Posterior vena cava (tissue), 2 donors: ENCODE measurements at regions of chr20 and their contacts with region 1.

Region 1: DNA sequence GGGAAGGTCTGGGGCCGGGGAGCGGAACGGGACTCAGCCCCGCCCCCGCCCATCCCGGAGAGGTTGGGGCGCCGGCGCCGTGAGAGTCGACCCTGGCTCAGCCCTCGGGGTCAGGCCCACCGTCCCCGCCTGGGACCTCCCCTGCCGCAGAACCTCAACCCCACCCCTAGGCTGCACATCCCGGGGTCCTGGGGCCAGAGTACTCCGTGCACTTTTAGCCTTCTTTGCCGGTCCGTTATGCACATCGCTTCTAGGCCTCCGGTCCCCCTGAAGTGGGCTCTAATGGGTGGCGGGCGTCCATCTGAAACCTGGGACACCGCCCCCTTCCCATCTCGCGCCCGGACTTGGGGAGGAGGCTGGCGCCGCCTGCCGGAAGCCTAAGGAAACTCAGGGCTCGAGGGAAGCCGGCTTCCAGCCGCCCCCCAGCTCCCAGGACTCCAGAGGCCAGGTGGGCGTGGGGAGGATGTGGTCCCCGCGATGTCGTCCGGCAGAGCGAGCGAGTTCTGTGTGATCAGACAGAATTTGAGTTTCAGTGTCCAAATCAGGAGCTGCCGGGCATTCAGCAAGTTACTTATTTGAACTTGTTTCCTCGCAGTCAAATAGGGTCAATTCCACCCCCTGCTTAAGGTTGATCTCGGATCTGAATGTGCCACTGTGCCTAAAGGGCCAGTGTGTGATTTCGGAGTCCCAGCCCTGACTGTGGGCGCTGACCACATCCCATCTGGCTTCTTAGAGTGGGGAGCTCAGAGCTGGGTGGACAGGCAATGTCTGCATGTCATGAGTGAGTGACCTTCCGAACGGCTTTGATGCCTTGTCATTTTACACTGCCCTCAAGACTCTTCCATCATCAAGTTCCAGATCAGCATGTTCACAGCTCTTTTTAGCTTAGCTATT is 47.6 kb downstream of the CPXM1 start:
- DNase-seq: no peak

Region 2: GRCh38 chr20:2783908-2784566 is 31.2 kb after region 1 on chr20:
- intact Hi-C with region 1: no loop called
- DNase-seq: no peak

Region 3: DNA sequence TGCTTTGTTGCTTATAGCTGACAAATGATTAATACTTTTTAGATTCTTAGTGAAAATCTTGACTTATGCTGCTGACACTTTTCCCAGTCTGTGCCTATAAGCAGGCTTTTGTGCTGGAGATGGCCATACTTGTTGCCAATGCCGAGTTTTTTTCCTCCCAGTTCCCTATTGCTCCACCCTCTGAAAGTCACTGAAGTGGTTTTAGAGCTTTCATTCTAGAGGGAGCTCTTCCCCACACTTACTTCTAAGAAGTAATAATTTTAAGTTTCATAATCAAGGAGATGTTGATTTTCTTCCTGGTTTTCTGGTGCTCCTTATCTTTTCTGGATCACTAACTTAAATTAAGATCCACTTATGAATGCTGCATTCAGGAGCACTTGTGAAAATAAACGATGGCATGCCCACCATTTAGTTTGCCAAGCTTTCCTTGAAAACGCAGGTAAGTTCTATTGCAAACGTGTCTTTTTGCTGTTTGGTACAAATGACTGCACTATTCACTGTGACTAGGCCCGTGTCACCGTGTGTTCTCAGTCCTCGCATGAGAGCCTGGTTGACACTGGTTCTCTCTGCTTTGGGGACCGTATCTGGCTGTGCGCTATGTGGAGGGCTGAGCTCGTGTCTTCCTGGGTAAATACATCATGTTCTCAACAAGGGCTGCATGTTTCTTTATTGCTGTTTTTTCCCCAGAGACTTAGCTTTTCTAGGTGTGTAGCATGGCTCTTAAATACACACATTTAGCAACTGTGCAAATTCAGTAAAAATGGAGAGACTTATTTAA is 860.2 kb after region 1 on chr20:
- intact Hi-C with region 1: loop called in 1 of 2 experiments (anchors 5 kb)
- DNase-seq: no peak